GM12878 (cell line): ENCODE measurements at regions of chr14 and their contacts with region 1.

Region 1: GRCh38 chr14:76918751-76919543 is 92.7 kb downstream of the LRRC74A start:
- DNase-seq: no peak
- ATAC-seq: peak; percentile 11
- H3K4me3 ChIP-seq: no peak overlapping the region
- H3K27ac ChIP-seq: no peak overlapping the region
- H3K4me1 ChIP-seq: peaks cover 5% of the 10 kb centered on the region
- H3K27me3 ChIP-seq: no peaks in the 10 kb centered on the region
- CTCF ChIP-seq: 0 out of 6 replicates have a peak, but pooled peaks of 1 of the 3 experiments have one; percentile 8
- EP300 ChIP-seq: no peak
- POLR2A ChIP-seq: no peak
- RAD21 ChIP-seq: peak; percentile 36; the same call in 1 of the 2 replicates

Region 2: DNA sequence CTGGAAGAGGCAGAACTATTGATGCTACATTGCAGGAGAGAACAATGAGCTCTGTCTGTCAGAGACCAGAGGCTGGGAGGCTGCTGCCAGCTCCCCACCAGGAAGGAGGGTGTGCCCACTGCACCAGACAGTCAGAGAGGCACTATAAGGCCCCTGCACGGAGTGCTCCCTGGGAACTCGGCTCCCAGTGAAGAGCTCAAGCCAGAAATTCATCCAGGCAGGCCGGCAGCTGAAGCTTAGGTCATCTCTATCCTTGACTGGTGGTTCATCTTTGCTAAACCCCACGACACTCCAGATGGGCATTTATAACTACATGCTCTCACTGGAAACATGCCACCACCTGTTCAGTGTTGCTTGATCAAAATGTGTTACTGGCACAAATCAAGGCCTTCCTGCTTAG is 832.3 kb before region 1 on chr14:
- CTCF ChIA-PET with region 1: no interaction called
- POLR2A ChIA-PET with region 1: no interaction called
- RAD21 ChIA-PET with region 1: no interaction called
- SMC1A ChIA-PET with region 1: no interaction called
- in situ Hi-C with region 1: no loop called
- intact Hi-C with region 1: no loop called
- DNase-seq: no peak
- ATAC-seq: no peak
- H3K4me3 ChIP-seq: no peak overlapping the region
- H3K27ac ChIP-seq: no peak overlapping the region
- H3K4me1 ChIP-seq: no peaks in the 10 kb centered on the region
- H3K27me3 ChIP-seq: no peaks in the 10 kb centered on the region; a peak in 1 of 4 replicates
- CTCF ChIP-seq: no peak
- EP300 ChIP-seq: no peak
- POLR2A ChIP-seq: no peak
- RAD21 ChIP-seq: no peak

Region 3: GRCh38 chr14:76855066-76855465 is 63.9 kb before region 1 on chr14:
- CTCF ChIA-PET with region 1: no interaction called
- POLR2A ChIA-PET with region 1: no interaction called
- RAD21 ChIA-PET with region 1: no interaction called
- SMC1A ChIA-PET with region 1: no interaction called
- in situ Hi-C with region 1: no loop called
- intact Hi-C with region 1: no loop called
- DNase-seq: no peak
- ATAC-seq: no peak
- H3K4me3 ChIP-seq: no peak overlapping the region
- H3K27ac ChIP-seq: no peak overlapping the region
- H3K4me1 ChIP-seq: no peaks in the 10 kb centered on the region
- H3K27me3 ChIP-seq: peaks cover 0 to 1% of the 10 kb centered on the region in 2 experiments; a peak in 1 of 4 replicates
- CTCF ChIP-seq: no peak
- EP300 ChIP-seq: no peak
- POLR2A ChIP-seq: no peak
- RAD21 ChIP-seq: no peak

Region 4: DNA sequence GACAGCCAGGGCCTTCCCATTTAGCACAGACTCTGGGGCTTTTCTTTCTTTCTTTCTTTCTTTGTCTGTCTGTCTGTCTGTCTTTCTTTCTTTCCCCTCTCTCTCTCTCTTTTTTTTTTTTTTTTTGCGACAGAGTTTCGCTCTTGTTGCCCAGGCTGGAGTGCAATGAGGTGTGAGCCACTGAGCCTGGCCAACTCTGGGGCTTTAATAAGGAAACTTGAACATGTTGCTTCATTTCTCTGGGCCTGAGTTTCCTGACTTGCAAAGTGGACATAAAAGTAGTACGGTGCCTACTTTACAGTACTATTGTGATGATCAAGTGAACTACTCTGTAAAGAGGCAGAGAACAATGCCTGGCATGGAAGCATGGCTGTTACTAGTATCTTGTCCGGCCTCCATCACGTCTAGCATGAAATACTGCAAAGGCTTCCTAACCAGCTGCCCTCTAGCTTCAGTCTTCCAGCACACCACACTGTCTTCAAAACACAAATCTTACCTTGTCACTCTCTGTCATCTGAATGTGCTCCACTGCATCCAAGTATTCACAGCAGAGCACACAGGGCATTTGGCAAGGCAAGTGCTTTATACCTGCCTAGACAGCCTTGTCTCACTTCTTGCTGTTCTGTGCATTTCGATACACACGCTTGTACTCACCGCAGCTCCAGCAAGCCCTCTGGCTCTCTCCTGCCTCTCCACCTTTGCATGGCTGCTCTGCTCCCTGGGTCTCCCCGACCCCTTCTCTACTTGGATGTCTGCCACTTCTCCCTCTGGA is 12.9 kb after region 1 on chr14:
- CTCF ChIA-PET with region 1: interaction called, 18 read pairs
- POLR2A ChIA-PET with region 1: interaction called, 7 read pairs
- RAD21 ChIA-PET with region 1: interaction called, 15 read pairs
- SMC1A ChIA-PET with region 1: interaction called, 16 read pairs
- in situ Hi-C with region 1: no loop called
- intact Hi-C with region 1: no loop called
- DNase-seq: no peak
- ATAC-seq: no peak
- H3K4me3 ChIP-seq: no peak overlapping the region
- H3K27ac ChIP-seq: no peak overlapping the region
- H3K4me1 ChIP-seq: peaks cover 16% of the 10 kb centered on the region
- H3K27me3 ChIP-seq: no peaks in the 10 kb centered on the region
- CTCF ChIP-seq: no peak
- EP300 ChIP-seq: no peak
- POLR2A ChIP-seq: no peak
- RAD21 ChIP-seq: no peak

Region 5: DNA sequence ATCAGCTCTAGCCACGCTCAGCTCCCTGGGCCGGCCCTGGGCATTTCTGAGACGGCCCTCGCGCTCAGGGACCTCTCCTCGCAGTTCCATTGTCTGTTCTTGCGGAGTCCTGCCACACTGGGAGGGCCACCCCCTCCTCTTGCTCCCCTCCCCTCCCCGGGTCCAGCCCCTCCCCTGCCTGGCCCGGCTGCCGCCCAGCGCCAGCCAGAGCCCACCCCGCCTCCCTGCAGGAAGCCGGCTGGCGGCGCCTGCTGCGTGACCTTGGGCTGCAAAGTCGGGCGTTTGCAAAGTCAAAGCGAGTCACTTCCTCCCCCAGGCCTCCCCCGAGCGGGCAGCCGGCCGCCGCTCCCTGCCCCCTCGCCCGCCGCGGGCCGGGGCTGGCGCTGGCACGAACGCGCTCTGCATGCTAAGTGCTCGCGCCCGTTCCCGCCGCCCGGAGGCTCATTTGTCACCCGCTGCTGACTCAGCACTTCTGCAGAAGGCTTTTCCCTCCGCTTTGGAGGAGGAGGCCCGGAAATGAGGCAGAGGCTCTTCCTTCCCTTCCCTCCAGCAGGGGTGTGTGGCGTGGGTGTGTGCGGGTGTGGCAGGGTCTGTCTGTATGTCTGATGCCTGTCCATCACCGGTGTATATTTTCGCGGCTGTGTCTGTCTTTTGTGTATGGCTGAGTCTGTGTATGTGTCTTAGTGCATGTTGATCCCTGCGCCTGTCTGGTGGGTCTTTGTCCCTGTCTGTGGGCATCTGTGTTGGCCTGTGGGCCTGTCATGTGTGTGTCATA is 37.6 kb after region 1 on chr14:
- CTCF ChIA-PET with region 1: interaction called, 50 read pairs
- POLR2A ChIA-PET with region 1: interaction called, 9 read pairs
- RAD21 ChIA-PET with region 1: interaction called, 51 read pairs
- SMC1A ChIA-PET with region 1: interaction called, 36 read pairs
- in situ Hi-C with region 1: no loop called
- intact Hi-C with region 1: no loop called
- DNase-seq: no peak
- ATAC-seq: peak; percentile 49
- H3K4me3 ChIP-seq: peak overlapping the region; percentile 68
- H3K27ac ChIP-seq: peak overlapping the region; percentile 100
- H3K4me1 ChIP-seq: peaks cover 73% of the 10 kb centered on the region
- H3K27me3 ChIP-seq: no peaks in the 10 kb centered on the region
- CTCF ChIP-seq: no peak
- EP300 ChIP-seq: peak; percentile 18 to 69; a peak in 2 of 4 replicates
- POLR2A ChIP-seq: peak; percentile 62
- RAD21 ChIP-seq: no peak

Region 6: DNA sequence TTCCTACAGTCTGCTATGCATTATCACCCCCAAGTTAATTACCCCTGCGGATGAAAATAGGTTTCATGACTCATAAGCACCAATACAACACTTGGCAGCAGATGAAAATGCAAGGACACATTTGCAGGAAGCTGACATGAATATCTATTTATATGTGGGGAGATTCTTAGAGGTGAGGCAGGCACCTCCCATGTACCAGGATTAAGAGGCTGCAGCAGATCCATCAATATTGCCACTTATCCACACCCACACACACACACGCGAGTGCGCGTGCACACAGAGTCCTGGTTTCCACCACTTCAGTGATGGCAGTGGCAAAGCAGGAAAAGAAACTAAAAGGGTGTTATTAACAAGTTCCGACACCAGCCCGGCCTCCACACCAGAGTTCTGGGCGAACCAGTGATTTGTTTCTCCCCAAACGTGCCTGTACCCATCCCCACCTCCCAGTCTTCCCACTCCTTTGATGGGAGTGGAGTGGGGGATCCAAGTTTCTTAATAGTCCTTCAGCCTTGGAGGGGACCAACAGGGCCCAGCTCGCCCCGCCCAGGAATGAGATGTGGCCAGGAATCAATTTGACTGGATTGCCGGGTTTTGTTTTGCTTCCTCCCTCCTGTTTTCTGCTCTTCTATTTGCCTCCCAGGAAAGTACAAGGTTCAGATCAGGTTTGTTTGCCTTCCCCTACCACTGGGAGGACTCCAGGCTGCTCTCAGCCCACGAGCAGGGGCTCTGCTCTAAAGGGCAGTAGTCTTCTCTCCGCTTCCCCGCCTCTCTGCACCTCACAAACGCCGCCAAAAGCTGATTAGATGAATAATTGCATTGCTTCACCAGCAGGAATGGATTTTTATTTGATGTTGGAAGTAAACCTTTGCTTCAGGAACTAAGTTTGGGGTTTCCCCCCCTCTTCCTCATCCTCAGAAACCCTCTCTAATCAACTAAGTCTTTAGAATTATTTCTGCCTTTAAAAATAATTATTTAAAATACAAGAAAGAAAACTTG is 104.4 kb after region 1 on chr14:
- CTCF ChIA-PET with region 1: interaction called, 25 read pairs
- POLR2A ChIA-PET with region 1: interaction called, 5 read pairs
- RAD21 ChIA-PET with region 1: interaction called, 23 read pairs
- SMC1A ChIA-PET with region 1: interaction called, 12 read pairs
- in situ Hi-C with region 1: no loop called
- intact Hi-C with region 1: no loop called
- DNase-seq: no peak
- ATAC-seq: peak; percentile 7
- H3K4me3 ChIP-seq: no peak overlapping the region
- H3K27ac ChIP-seq: peak overlapping the region; percentile 56
- H3K4me1 ChIP-seq: peaks cover 51% of the 10 kb centered on the region
- H3K27me3 ChIP-seq: no peaks in the 10 kb centered on the region
- CTCF ChIP-seq: 0 out of 6 replicates have a peak, but pooled peaks of 2 of the 3 experiments have one; percentile 2 to 14
- EP300 ChIP-seq: no peak
- POLR2A ChIP-seq: no peak
- RAD21 ChIP-seq: no peak

Region 7: DNA sequence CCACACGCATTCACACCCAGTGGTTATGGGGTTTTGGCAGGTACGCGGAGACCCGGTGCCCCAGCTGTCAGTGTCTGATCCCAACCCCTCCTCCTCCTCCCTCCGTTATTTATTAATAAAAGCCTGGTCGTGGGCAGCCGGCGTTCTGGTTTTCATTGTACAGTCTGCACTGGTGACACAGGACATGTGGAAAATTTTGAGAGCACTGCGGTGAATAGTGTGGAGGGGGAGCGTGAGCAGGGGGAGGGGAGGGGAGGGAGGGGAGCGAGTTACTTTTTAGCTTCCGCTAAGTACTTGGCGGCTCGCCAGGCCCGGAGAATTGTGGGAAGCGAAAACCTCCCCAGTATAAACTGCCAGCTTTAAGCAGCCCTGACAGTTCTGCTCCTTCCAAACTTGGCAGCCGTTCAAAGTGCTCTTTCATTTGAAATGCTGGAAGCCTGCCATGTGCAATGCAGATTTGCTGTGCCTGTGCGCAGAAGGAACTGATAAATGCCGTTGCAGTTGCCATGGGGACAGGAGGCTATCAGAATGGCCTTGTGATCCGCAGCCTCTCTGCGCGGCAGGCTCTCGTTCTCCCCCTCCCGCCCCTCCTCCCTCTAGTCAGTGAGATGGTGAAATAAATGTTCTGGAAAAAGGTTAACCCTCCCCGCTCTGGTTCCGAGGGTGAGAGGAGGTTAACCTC is 121.3 kb after region 1 on chr14:
- CTCF ChIA-PET with region 1: interaction called, 42 read pairs
- POLR2A ChIA-PET with region 1: interaction called, 4 read pairs
- RAD21 ChIA-PET with region 1: interaction called, 19 read pairs
- SMC1A ChIA-PET with region 1: interaction called, 31 read pairs
- in situ Hi-C with region 1: no loop called
- intact Hi-C with region 1: no loop called
- DNase-seq: peak; percentile 99
- ATAC-seq: peak; percentile 75
- H3K4me3 ChIP-seq: peak overlapping the region; percentile 50
- H3K27ac ChIP-seq: peak overlapping the region; percentile 93
- H3K4me1 ChIP-seq: peaks cover 87% of the 10 kb centered on the region
- H3K27me3 ChIP-seq: no peaks in the 10 kb centered on the region
- CTCF ChIP-seq: no peak
- EP300 ChIP-seq: peak; percentile 42 to 61
- POLR2A ChIP-seq: peak; percentile 55; the same call in 1 of the 2 replicates
- RAD21 ChIP-seq: no peak